ENCODE measurements at regions of chr13 and their contacts with region 1.

Region 1: GRCh38 chr13:51148952-51149573 is 38.0 kb upstream of the C13orf42 start:
- DNase-seq: no peak
- H3K4me3 ChIP-seq: no peak overlapping the region
- H3K27ac ChIP-seq: peak overlapping the region in 1 of 4 donors; percentile 21
- H3K4me1 ChIP-seq: peaks cover 0 to 13% (median 5%) of the 10 kb centered on the region in 4 donors
- H3K27me3 ChIP-seq: no peaks in the 10 kb centered on the region
- CTCF ChIP-seq: peak; percentile 54 to 76 (median 67)
- EP300 ChIP-seq: no peak
- POLR2A ChIP-seq: no peak

Region 2: DNA sequence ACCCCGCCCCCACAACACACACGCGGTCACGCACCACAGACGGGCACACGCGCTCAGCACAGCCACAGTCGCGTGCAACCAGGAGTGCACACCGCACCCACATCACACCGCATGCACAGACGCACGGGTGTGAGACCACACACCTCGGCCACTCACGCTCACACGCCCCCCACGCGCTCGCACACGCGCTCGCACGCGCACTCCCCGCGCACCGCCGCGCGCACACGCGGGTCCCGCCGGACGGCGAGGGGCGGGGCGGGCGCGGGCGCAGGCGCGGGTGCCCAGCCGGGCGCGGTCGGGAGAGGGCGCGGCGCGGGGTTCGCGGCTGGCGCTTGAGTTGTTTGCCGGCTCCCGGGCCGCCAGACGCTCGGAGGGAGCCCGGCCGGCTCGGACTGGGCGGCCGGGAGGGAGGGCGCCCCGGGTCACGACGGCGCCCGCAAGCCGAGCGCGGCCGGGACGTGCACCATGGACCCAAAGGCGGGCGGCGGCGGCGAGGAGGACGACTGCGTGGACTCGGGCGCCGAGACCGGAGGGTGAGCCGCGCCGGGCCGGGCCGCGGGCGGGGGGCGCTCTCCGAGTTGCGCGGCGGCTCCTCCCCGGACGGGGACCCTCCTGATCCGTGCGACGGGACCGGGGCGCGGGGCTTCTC is 73.1 kb after region 1 on chr13 and contains the start of gene FAM124A:
- intact Hi-C with region 1: loop called (anchors 5 kb)
- DNase-seq: no peak
- H3K4me3 ChIP-seq: peak within 1 kb of the TSS; percentile 84 to 99 (median 97)
- H3K27ac ChIP-seq: peak within 1 kb of the TSS; percentile 80 to 91 (median 90)
- H3K4me1 ChIP-seq: peaks cover 15 to 54% (median 44%) of the 10 kb centered on the region in 4 donors
- H3K27me3 ChIP-seq: no peaks in the 10 kb centered on the region
- CTCF ChIP-seq: peak in 2 of 3 experiments; percentile 45 to 51
- EP300 ChIP-seq: no peak
- POLR2A ChIP-seq: no peak
- total RNA-seq, gene FAM124A: 17.0 to 30.3 (median 21.0) TPM

Region 3: DNA sequence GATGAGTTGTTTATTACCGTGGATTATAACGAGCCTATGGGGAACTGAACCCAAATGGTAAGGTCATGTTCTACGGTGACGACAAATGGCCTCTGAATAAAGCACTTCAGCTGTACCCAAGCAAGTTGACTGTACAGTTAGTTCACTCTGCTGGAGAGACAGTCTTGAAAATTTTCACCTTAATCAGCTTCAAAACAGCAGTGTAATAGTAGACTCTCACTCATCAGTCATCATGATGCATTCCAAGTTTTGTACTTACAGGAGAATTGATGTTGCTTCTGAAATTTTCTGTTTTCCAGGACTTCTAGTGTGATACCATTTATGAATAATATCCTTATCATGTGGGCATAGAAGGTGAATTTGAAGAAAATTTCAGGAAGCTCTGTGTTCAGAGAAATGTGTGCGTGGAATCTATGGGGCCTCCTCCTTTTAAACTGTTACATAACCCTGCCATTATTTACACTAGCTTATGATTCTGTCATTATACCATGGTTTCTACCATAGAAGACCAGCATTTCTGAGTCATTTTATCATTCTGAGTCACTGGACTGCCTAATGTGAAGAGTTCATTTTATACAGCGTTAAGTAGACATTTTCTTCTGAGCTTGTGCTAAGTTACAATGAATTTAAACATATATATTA is 532.1 kb after region 1 on chr13:
- intact Hi-C with region 1: no loop called
- DNase-seq: no peak
- H3K4me3 ChIP-seq: no peak overlapping the region
- H3K27ac ChIP-seq: no peak overlapping the region
- H3K4me1 ChIP-seq: no peaks in the 10 kb centered on the region
- H3K27me3 ChIP-seq: no peaks in the 10 kb centered on the region
- CTCF ChIP-seq: no peak
- EP300 ChIP-seq: no peak
- POLR2A ChIP-seq: no peak